ENCODE measurements at regions of chr1 and their contacts with region 1.

Region 1: GRCh38 chr1:51729156-51729823 is 112.4 kb downstream of the OSBPL9 start:
- DNase-seq: peak; percentile 98
- CTCF ChIP-seq: no peak

Region 2: GRCh38 chr1:51569284-51570062 is 159.8 kb before region 1 on chr1:
- CTCF ChIA-PET with region 1: no interaction called
- POLR2A ChIA-PET with region 1: interaction called, 12 read pairs
- DNase-seq: no peak
- CTCF ChIP-seq: peak; percentile 37

Region 3: DNA sequence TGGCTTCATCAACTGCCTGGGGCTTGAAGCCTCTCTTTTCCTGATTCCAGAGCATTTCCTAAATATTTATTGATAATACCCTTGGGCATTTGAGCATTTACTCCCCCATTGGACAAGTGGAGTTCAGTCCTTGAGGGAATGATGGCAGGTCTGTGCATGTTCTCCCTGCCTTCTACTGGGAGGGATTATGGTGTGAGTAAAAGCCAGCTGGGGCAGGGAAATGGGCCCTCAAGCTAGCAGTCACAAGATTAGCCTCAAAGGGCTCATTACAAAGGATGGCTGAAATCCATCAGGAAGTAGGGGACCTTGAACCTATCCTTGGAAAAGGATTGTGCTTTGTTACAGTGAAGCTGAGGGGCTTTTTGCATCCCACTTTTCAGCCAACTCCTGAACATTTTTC is 136.6 kb before region 1 on chr1:
- CTCF ChIA-PET with region 1: no interaction called
- POLR2A ChIA-PET with region 1: no interaction called
- DNase-seq: no peak
- CTCF ChIP-seq: no peak

Region 4: GRCh38 chr1:51714374-51715019 is 14.8 kb before region 1 on chr1:
- CTCF ChIA-PET with region 1: interaction called, 18 read pairs
- POLR2A ChIA-PET with region 1: no interaction called
- DNase-seq: no peak
- CTCF ChIP-seq: no peak